Activated naive CD4-positive, alpha-beta T cell treated with anti-CD3 and anti-CD28 coated beads for 36 hours (primary cell): ENCODE measurements at regions of chrX and their contacts with region 1.

Region 1: GRCh38 chrX:137166591-137166990 is 132.8 kb upstream of the GPR101 start:
- DNase-seq: peak; percentile 48
- H3K4me3 Mint-ChIP-seq: no peak overlapping the region
- H3K27ac Mint-ChIP-seq: no peak overlapping the region
- H3K4me1 Mint-ChIP-seq: no peaks in the 10 kb centered on the region
- H3K27me3 Mint-ChIP-seq: peaks cover 3% of the 10 kb centered on the region

Region 2: GRCh38 chrX:137194164-137194563 is 27.6 kb after region 1 on chrX:
- CTCF ChIA-PET with region 1: interaction called, 23 read pairs
- intact Hi-C with region 1: no loop called
- DNase-seq: peak; percentile 36
- H3K4me3 Mint-ChIP-seq: no peak overlapping the region
- H3K27ac Mint-ChIP-seq: no peak overlapping the region
- H3K4me1 Mint-ChIP-seq: peaks cover 2% of the 10 kb centered on the region
- H3K27me3 Mint-ChIP-seq: no peaks in the 10 kb centered on the region

Region 3: DNA sequence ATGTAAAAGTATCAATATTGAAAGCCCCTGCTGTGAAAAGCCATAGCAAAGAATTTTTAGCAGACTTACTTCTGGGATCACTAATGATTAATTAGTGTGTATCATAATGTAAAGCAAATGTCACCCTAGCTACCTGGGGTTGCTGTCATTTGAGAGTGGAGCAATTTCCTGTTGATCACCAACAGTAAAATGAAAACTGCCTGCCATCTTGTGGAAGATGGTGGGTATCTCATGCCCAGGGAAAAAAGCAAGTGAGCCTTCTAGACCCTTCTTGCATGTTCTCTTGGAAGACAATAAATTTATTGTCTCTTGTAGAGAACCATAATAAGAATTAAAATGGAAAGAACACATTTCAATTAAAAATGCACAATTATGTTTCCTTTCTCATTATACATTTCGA is 759.5 kb after region 1 on chrX:
- CTCF ChIA-PET with region 1: no interaction called
- intact Hi-C with region 1: loop called (anchors 10 kb)
- DNase-seq: no peak
- H3K4me3 Mint-ChIP-seq: no peak overlapping the region
- H3K27ac Mint-ChIP-seq: no peak overlapping the region
- H3K4me1 Mint-ChIP-seq: no peaks in the 10 kb centered on the region
- H3K27me3 Mint-ChIP-seq: no peaks in the 10 kb centered on the region